ENCODE measurements at regions of chr11 and their contacts with region 1.

Region 1: GRCh38 chr11:57482782-57483561 is 22.6 kb downstream of the RTN4RL2 start:
- DNase-seq: no peak

Region 2: GRCh38 chr11:57444362-57445121 is 38.4 kb before region 1 on chr11:
- CTCF ChIA-PET with region 1: no interaction called
- POLR2A ChIA-PET with region 1: no interaction called
- DNase-seq: no peak

Region 3: DNA sequence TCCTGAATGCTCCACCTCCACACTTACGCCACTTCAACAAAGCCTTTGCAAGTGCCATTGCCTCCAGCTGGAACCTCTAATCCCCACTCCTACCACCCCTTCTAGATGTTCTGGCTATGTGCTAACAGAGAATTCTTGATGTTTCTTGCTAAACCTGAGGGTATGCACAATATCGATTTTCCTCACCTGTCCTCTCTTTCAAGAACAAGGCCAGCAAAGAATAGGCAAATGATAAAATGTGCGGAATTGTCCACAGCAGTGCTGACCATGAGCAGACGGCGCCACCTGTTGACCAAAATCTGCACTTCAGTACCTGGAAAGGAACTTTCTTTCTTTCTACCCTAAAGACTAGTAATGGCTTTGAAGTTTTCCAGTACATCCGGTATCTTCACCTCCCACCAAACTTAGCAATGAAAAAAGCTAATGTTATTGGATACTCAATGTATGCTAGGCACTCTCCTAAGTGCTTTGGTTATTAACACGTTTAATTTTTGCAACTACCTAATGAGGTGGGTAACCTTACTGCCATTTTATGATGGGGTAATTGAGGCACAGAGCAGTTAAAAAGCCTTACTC is 44.2 kb after region 1 on chr11:
- CTCF ChIA-PET with region 1: interaction called, 13 read pairs
- POLR2A ChIA-PET with region 1: no interaction called
- DNase-seq: peak; percentile 57

Measured in HEK293T (cell line).